Activated T-helper 1 cell treated with anti-CD3 and anti-CD28 coated beads, Interleukin-12 subunit alpha, Interleukin-12 subunit beta, Interleukin-2, Interleukin-4 antibody, amounts not matched to agents 30 ng/mL and 10 ng/mL and 1 ng/mL, durations not matched to agents 14 hours and 24 hours and 36 hours (primary cell): ENCODE measurements at regions of chr3 and their contacts with region 1.

Region 1: DNA sequence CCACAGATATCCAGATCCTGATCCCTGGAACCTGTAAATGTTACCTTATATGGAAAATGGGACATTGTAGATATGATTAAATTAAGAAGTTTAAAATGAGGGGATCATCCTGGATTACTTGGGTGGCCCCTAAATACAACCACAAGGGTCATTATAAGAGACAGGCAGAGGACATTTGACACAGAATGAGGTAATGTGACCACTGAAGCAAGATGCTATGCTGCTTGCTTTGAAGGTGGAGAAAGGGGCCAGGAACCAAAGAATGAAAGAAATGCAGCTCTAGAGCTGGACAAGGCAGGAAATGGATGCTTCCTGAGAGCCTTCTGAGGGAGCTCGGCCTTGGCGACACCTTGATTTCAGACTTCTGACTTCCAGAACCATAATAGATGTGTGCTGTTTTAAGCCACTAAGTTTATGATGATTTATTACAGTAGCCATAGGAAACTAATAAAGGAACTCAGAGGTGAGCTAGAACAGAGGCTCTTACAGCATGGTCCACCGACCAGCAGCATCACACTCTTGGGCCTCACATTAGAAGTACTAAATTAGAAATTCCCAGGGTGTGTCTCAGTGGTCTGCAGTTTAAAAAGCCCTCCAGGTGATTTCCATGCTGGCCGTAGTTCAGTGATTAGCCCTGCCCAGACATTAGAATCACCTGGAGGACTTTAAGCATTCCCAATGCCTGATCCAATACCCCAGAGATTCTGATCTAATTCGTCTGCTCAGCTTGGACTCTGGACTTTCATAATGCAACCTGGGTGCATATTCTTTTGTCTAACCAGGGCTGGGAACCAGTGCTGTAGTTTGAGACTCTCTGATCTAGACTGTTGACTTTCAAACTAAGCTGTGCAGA is 7.5 kb downstream of the COLQ start:
- DNase-seq: no peak
- H3K4me3 Mint-ChIP-seq: no peak overlapping the region
- H3K27ac Mint-ChIP-seq: no peak overlapping the region
- H3K4me1 Mint-ChIP-seq: peaks cover 8% of the 10 kb centered on the region
- H3K27me3 Mint-ChIP-seq: peaks cover 12% of the 10 kb centered on the region

Region 2: DNA sequence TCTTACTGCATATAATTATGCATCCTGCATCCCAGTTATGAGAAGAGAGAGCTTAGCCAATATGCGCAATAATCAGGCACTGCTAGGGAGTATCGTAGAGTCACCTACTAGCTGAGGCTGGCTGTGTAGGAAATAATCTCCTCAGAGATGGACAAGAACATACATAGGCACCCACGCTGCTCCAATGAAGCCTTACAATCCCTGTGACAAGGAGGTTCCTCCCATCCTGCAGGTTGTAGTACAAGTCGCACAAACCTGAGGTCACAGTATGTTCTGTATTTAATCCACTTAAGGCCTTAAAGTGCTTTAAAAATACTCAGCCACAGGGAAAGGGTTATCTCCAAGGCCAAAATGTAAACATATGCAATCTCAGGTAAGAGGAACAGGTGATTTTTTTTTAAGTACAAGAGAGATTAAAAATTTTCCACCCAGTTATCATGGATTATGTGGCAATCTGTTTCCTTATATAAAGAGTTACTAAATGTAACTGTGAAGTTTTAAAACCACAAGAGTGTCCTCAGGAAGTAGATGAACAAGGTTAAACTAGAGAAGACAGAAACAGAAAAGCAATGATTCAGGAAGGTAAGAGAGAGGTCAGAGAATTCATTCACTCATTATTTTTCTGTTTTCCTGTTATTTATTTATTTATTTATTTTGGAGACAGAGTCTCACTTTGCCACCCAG is 15.0 kb after region 1 on chr3:
- intact Hi-C with region 1: loop called (anchors 2 kb)
- DNase-seq: no peak
- H3K4me3 Mint-ChIP-seq: no peak overlapping the region
- H3K27ac Mint-ChIP-seq: peak overlapping the region; percentile 30
- H3K4me1 Mint-ChIP-seq: peaks cover 25% of the 10 kb centered on the region
- H3K27me3 Mint-ChIP-seq: no peaks in the 10 kb centered on the region